Stomach (tissue), 19 donors: ENCODE measurements at regions of chr5 and their contacts with region 1.

Region 1: GRCh38 chr5:171336521-171337209 is 27.6 kb downstream of the TLX3 start:
- DNase-seq: peak; percentile 36 to 84
- H3K4me3 ChIP-seq: peak overlapping the region; percentile 21 to 45 (median 34)
- H3K27ac ChIP-seq: no peak overlapping the region
- H3K4me1 ChIP-seq: peaks cover 3 to 21% (median 10%) of the 10 kb centered on the region in 4 donors
- H3K27me3 ChIP-seq: peaks cover 0 to 85% (median 12%) of the 10 kb centered on the region in 3 donors
- CTCF ChIP-seq: peak in 5 of 7 experiments; percentile 12 to 38 (median 17)
- EP300 ChIP-seq: no peak
- POLR2A ChIP-seq: no peak

Region 2: GRCh38 chr5:170681013-170681433 is 655.6 kb before region 1 on chr5:
- intact Hi-C with region 1: no loop called
- DNase-seq: peak in 1 of 2 donors; percentile 87
- H3K4me3 ChIP-seq: no peak overlapping the region
- H3K27ac ChIP-seq: no peak overlapping the region
- H3K4me1 ChIP-seq: peaks cover 0 to 7% (median 3%) of the 10 kb centered on the region in 4 donors
- H3K27me3 ChIP-seq: peaks cover 4 to 70% (median 14%) of the 10 kb centered on the region in 3 donors
- CTCF ChIP-seq: no peak
- EP300 ChIP-seq: no peak
- POLR2A ChIP-seq: no peak

Region 3: GRCh38 chr5:170813231-170813630 is 523.4 kb before region 1 on chr5:
- intact Hi-C with region 1: loop called (anchors 5 kb)
- DNase-seq: no peak
- H3K4me3 ChIP-seq: no peak overlapping the region
- H3K27ac ChIP-seq: no peak overlapping the region
- H3K4me1 ChIP-seq: no peaks in the 10 kb centered on the region
- H3K27me3 ChIP-seq: no peaks in the 10 kb centered on the region
- CTCF ChIP-seq: no peak
- EP300 ChIP-seq: no peak
- POLR2A ChIP-seq: no peak